IMR-90 (cell line): ENCODE measurements at regions of chr15 and their contacts with region 1.

Region 1: GRCh38 chr15:29925227-29926082 is 103.2 kb upstream of the TJP1 start:
- DNase-seq: peak; percentile 80
- ATAC-seq: peak; percentile 72
- H3K4me3 ChIP-seq: no peak overlapping the region
- H3K27ac ChIP-seq: peak overlapping the region; percentile 44
- H3K4me1 ChIP-seq: peaks cover 17% of the 10 kb centered on the region
- H3K27me3 ChIP-seq: no peaks in the 10 kb centered on the region
- CTCF ChIP-seq: peak; percentile 94
- POLR2A ChIP-seq: peak; percentile 50; the same call in 1 of the 2 replicates
- RAD21 ChIP-seq: peak; percentile 87

Region 2: DNA sequence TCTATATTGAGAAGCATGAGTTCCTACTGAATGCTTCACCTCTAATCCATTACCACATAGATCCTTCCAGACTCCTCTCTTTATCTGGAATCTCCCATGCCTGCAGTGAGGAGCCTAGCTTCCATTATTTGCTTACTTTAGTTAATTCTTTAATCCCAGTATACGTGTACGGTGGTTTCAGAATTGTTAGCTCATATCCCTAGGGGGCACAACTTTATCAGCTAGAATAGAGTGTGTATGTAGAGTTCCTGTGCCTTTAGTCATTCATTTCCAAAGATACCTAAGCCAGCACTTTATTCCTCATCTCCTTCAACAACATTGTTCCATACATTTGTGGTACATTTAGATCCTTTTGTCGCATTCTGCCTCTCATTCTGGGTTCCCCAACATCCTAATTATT is 329.2 kb before region 1 on chr15:
- CTCF ChIA-PET with region 1: no interaction called
- POLR2A ChIA-PET with region 1: no interaction called
- dilution Hi-C with region 1: no loop called
- in situ Hi-C with region 1: no loop called
- intact Hi-C with region 1: no loop called
- DNase-seq: peak; percentile 45
- ATAC-seq: peak; percentile 81
- H3K4me3 ChIP-seq: no peak overlapping the region
- H3K27ac ChIP-seq: no peak overlapping the region
- H3K4me1 ChIP-seq: no peaks in the 10 kb centered on the region
- H3K27me3 ChIP-seq: peaks cover 10% of the 10 kb centered on the region
- CTCF ChIP-seq: peak; percentile 44
- POLR2A ChIP-seq: no peak
- RAD21 ChIP-seq: peak; percentile 48

Region 3: GRCh38 chr15:29747837-29748417 is 177.5 kb before region 1 on chr15:
- CTCF ChIA-PET with region 1: interaction called, 18 read pairs
- POLR2A ChIA-PET with region 1: interaction called, 11 read pairs
- dilution Hi-C with region 1: no loop called
- in situ Hi-C with region 1: loop called (anchors 5 kb)
- intact Hi-C with region 1: loop called (anchors 1 kb)
- DNase-seq: peak; percentile 37
- ATAC-seq: peak; percentile 40; the same call in 1 of the 2 replicates
- H3K4me3 ChIP-seq: no peak overlapping the region
- H3K27ac ChIP-seq: no peak overlapping the region
- H3K4me1 ChIP-seq: no peaks in the 10 kb centered on the region
- H3K27me3 ChIP-seq: no peaks in the 10 kb centered on the region
- CTCF ChIP-seq: peak; percentile 50
- POLR2A ChIP-seq: no peak
- RAD21 ChIP-seq: peak; percentile 52

Region 4: DNA sequence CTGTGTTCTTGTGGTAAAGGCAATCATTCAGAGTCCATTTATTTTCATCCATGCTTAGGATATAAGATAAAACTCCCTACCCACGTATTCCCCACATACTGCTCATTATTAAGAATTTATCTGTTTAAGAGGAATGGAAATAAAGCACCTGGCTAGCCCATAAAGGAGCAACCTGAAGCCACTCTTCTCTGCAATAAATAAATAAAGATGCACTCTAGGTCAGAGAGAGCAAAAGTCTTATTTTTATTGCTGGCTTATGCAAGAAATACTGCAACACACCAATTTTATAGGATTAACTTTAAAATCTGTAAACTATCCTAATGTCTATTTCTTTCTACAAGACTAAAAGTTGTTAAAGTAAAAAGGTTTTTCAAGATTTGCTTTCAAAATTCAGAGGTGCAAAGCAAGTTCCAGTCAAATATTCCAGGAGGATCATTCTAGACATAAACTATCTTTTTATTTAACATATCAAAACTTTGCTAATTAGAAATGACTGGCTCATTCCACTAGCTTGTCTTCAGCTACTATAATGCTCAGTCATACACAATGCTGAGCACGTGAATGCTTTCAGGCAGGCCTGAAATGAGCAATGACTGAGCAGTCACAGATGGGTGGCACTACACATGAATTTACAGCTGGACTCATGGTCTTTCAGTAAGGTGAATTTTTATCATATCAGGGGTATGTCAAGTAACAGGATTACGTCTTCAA is 110.3 kb before region 1 on chr15:
- CTCF ChIA-PET with region 1: interaction called, 17 read pairs
- POLR2A ChIA-PET with region 1: no interaction called
- dilution Hi-C with region 1: no loop called
- in situ Hi-C with region 1: loop called (anchors 10 kb)
- intact Hi-C with region 1: no loop called
- DNase-seq: peak; percentile 65
- ATAC-seq: peak; percentile 76
- H3K4me3 ChIP-seq: no peak overlapping the region
- H3K27ac ChIP-seq: no peak overlapping the region
- H3K4me1 ChIP-seq: peaks cover 6% of the 10 kb centered on the region
- H3K27me3 ChIP-seq: no peaks in the 10 kb centered on the region
- CTCF ChIP-seq: no peak
- POLR2A ChIP-seq: no peak
- RAD21 ChIP-seq: no peak

Region 5: GRCh38 chr15:29821416-29822131 is 103.9 kb before region 1 on chr15:
- CTCF ChIA-PET with region 1: interaction called, 17 read pairs
- POLR2A ChIA-PET with region 1: interaction called, 3 read pairs
- dilution Hi-C with region 1: no loop called
- in situ Hi-C with region 1: loop called (anchors 10 kb)
- intact Hi-C with region 1: loop called (anchors 1 kb)
- DNase-seq: peak; percentile 85
- ATAC-seq: peak; percentile 47
- H3K4me3 ChIP-seq: peak overlapping the region; percentile 95
- H3K27ac ChIP-seq: peak overlapping the region; percentile 99
- H3K4me1 ChIP-seq: peaks cover 4% of the 10 kb centered on the region
- H3K27me3 ChIP-seq: no peaks in the 10 kb centered on the region
- CTCF ChIP-seq: peak; percentile 41
- POLR2A ChIP-seq: no peak; the same call in 1 of the 2 replicates
- RAD21 ChIP-seq: peak; percentile 50

Region 6: DNA sequence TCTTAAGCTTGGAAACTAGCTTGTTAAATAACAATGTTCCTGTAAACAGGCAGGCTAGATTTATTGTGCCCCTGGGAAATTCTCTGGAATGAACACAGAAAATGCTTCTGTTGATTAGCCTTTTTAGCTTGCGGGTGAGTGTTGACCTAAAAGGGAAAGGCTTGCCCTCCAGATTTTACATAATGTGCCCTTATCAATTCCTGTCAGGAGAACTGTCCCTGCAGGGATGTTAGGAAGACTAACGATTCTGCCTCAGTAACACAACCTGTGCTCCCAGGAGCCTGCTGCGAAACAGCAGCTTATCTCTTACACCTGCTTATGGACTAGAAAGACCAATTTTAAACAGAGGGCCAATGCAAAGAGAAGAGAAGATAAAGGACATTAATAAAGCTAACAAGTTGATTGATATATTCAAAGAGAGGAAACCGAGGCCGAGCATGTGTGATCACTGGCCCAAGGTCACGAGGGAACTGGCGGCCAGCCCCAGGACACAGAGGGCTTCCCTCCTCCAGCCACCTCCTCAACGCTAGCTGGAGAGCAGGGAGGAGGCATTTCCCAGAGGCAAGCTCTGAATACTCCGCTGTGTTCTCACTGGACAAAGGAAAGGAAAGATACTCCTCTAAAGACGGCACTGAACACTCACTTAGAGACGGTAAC is 54.8 kb before region 1 on chr15:
- CTCF ChIA-PET with region 1: interaction called, 8 read pairs
- POLR2A ChIA-PET with region 1: no interaction called
- dilution Hi-C with region 1: no loop called
- in situ Hi-C with region 1: loop called (anchors 10 kb)
- intact Hi-C with region 1: no loop called
- DNase-seq: no peak
- ATAC-seq: no peak
- H3K4me3 ChIP-seq: no peak overlapping the region
- H3K27ac ChIP-seq: no peak overlapping the region
- H3K4me1 ChIP-seq: no peaks in the 10 kb centered on the region
- H3K27me3 ChIP-seq: no peaks in the 10 kb centered on the region; the same call in 1 of the 2 replicates
- CTCF ChIP-seq: no peak
- POLR2A ChIP-seq: no peak
- RAD21 ChIP-seq: no peak

Region 7: DNA sequence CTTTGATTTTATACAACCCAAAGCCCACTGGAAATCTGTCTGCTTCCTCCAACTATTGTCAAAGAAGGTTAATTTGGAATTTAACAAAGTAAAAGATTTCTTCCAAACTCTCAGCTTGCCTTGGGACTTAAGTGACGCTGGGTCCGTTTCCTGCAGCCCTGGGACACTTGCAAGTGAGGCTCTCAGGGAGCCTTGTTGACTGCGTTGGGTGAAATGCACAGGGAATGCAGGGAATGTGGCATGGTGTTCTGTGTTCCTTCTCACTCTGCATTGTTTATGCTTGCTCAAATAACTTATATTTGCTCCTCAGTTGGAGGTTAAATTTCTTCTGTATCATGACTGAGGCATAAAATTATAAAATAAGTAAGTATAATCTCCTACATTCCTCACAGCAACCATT is 42.3 kb before region 1 on chr15:
- CTCF ChIA-PET with region 1: interaction called, 10 read pairs
- POLR2A ChIA-PET with region 1: interaction called, 5 read pairs
- dilution Hi-C with region 1: no loop called
- in situ Hi-C with region 1: loop called (anchors 10 kb)
- intact Hi-C with region 1: no loop called
- DNase-seq: peak; percentile 29
- ATAC-seq: peak; percentile 84
- H3K4me3 ChIP-seq: no peak overlapping the region
- H3K27ac ChIP-seq: peak overlapping the region; percentile 26; the same call in 1 of the 2 replicates
- H3K4me1 ChIP-seq: peaks cover 15% of the 10 kb centered on the region
- H3K27me3 ChIP-seq: no peaks in the 10 kb centered on the region
- CTCF ChIP-seq: no peak
- POLR2A ChIP-seq: no peak
- RAD21 ChIP-seq: no peak

Region 8: DNA sequence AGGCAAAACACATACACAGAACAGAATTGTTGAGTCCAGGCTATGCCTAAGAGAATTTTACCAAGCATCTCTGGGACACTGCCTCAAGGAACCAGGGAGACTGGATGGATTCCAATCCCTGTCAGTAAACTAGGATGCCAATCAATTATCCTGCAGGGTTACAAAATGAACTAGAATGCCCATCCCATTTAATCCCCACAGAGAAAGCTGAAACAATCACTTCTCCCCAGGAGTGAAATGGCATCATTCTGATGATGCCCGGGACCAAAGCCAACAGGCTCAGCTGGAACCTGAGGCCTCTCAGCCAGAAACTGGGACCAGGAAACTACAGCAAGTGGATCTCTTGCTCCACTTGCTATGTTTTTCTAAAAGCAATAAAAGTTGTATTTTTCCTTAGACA is 26.8 kb after region 1 on chr15:
- CTCF ChIA-PET with region 1: no interaction called
- POLR2A ChIA-PET with region 1: no interaction called
- dilution Hi-C with region 1: no loop called
- in situ Hi-C with region 1: no loop called
- intact Hi-C with region 1: no loop called
- DNase-seq: no peak
- ATAC-seq: no peak
- H3K4me3 ChIP-seq: no peak overlapping the region
- H3K27ac ChIP-seq: no peak overlapping the region
- H3K4me1 ChIP-seq: no peaks in the 10 kb centered on the region
- H3K27me3 ChIP-seq: peaks cover 5% of the 10 kb centered on the region
- CTCF ChIP-seq: no peak
- POLR2A ChIP-seq: no peak
- RAD21 ChIP-seq: no peak